Vagina (tissue), 2 donors: ENCODE measurements at regions of chr4 and their contacts with region 1.

Region 1: GRCh38 chr4:56907489-56908205 is at the start of gene REST:
- DNase-seq: peak in 1 of 2 donors; percentile 91
- H3K4me3 ChIP-seq: peak within 1 kb of the TSS; percentile 65 to 70
- H3K27ac ChIP-seq: peak within 1 kb of the TSS; percentile 88
- H3K4me1 ChIP-seq: peaks cover 38% of the 10 kb centered on the region
- H3K27me3 ChIP-seq: no peaks in the 10 kb centered on the region
- CTCF ChIP-seq: no peak
- POLR2A ChIP-seq: peak in 1 of 2 donors; percentile 58
- total RNA-seq, gene REST: 24.6 TPM

Region 2: GRCh38 chr4:56977321-56978012 is 69.8 kb after region 1 on chr4 and contains the start of gene NOA1:
- intact Hi-C with region 1: loop called (anchors 5 kb)
- DNase-seq: peak; percentile 98
- H3K4me3 ChIP-seq: peak within 1 kb of the TSS; percentile 75 to 82
- H3K27ac ChIP-seq: peak within 1 kb of the TSS; percentile 91
- H3K4me1 ChIP-seq: peaks cover 58% of the 10 kb centered on the region
- H3K27me3 ChIP-seq: no peaks in the 10 kb centered on the region
- CTCF ChIP-seq: no peak
- POLR2A ChIP-seq: peak in 1 of 2 donors; percentile 32
- total RNA-seq, gene NOA1: 25.3 TPM

Region 3: DNA sequence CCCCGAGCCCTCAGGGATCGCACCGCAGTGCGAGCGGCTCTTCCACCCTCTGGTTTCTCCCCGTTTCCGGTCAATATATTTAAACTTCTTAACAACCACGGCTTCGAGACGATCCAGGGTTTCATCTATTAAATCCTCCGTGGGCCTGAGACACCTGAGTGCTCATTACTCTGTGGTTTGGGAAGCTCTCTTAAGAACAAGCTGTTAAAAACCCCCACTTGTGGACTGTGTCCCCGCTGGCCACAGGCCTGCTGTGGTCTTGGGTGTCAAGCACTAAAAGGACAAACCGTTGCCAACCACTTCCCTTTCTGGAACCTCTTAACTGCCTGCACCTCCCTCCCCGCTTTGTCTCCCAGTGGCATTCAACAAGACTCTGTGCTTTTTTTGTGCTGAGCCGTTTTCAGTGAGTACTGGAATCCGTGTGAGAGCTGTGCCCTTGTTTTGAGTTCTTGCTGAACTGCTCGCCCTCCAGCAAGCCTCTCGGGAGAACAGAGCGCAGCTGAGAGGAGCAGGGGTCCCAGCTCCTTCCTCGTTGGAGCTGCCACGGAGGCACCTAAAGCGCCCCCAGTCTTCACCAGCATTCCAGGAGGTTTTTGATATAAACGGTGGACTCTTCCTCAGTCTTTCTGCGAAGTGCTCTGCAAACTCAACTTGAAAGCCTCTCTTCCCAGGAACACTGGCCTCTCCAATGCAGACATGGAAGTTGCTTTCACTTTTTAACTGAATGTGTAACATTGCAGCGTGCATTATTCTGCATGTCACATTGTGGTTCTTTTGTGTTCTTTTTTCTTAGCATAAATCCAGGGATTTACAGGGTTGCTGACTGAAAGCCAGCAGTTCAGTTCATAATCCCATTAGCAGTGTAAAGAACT is 203.2 kb after region 1 on chr4:
- intact Hi-C with region 1: loop called (anchors 5 kb)
- DNase-seq: no peak
- H3K4me3 ChIP-seq: peak overlapping the region; percentile 60 to 61
- H3K27ac ChIP-seq: peak overlapping the region; percentile 95
- H3K4me1 ChIP-seq: no peaks in the 10 kb centered on the region
- H3K27me3 ChIP-seq: no peaks in the 10 kb centered on the region
- CTCF ChIP-seq: no peak
- POLR2A ChIP-seq: no peak

Region 4: GRCh38 chr4:57726154-57726553 is 818.5 kb after region 1 on chr4:
- intact Hi-C with region 1: no loop called
- DNase-seq: no peak
- H3K4me3 ChIP-seq: no peak overlapping the region
- H3K27ac ChIP-seq: no peak overlapping the region
- H3K4me1 ChIP-seq: no peaks in the 10 kb centered on the region
- H3K27me3 ChIP-seq: no peaks in the 10 kb centered on the region
- CTCF ChIP-seq: no peak
- POLR2A ChIP-seq: no peak